ENCODE measurements at regions of chr4 and their contacts with region 1.

Region 1: GRCh38 chr4:87422104-87423052 is at the start of gene NUDT9:
- DNase-seq: peak; percentile 98
- ATAC-seq: peak; percentile 88
- total RNA-seq, gene NUDT9: 27.8 to 35.9 TPM

Region 2: DNA sequence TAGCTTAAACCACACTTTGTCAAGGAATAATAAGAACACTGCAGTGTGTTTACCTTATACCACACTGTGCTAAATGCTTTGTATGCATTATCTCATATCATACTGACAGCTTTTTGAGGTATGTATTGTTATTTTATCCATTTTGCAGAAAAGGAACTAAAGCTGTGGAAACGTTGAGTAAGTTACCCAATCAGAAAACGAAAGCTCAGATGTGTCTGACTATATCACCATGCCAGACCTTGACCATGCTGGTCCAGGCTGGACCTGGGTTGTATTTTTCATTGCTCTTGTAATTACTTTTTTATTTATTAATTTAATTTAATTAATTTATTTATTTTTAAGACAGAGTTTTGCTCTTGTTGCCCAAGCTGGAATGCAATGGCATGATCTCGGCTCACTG is 33.5 kb before region 1 on chr4:
- intact Hi-C with region 1: loop called in 1 of 2 experiments (anchors 5 kb)
- DNase-seq: no peak
- ATAC-seq: no peak

Region 3: DNA sequence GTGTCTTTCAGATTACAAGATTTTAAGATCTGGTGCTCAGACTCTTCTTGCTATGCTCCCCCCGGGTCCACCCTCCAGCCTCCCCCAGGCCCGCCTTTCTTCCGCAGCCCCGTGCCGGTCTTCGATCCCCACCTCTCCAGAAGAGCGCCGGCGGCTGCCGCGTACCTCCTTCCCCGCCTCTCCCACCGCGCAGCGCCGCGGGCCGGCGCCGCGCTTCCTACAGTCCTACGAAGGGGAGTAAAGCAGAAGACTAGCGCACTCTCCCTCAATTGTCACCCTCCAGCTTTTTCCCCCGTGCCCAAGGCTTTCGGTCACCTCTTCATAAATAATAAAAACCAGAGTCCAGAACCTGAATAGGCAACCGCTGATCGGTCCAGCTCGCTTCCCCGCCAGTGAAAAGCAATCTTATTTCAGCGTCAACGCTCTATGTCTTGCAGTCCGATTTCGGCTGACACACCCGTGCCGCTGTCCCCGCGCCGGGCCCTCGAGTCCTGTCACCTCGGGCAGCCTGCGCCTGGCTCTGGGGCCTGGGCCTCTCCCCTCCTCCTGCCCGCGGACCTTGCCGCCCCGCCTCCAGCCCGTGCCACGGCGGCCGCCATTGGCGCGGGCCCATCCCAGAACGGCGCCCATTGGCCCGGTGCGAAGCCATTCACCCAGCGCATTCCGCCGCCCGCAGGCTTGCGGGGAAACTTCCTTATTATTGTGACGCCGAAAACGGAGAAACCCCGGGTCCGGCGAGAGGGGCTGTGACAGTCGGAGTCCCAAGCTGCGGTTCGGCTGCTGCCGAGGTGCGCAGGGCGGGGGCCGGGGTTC is 1169.6 kb after region 1 on chr4 and contains the start of gene HERC3:
- intact Hi-C with region 1: no loop called
- DNase-seq: peak; percentile 91 to 93
- ATAC-seq: peak; percentile 94
- total RNA-seq, gene HERC3: 44.7 to 52.0 TPM

Measured in left colon (tissue), 2 donors.